Gastrocnemius medialis (tissue), 4 donors: ENCODE measurements at regions of chr9 and their contacts with region 1.

Region 1: DNA sequence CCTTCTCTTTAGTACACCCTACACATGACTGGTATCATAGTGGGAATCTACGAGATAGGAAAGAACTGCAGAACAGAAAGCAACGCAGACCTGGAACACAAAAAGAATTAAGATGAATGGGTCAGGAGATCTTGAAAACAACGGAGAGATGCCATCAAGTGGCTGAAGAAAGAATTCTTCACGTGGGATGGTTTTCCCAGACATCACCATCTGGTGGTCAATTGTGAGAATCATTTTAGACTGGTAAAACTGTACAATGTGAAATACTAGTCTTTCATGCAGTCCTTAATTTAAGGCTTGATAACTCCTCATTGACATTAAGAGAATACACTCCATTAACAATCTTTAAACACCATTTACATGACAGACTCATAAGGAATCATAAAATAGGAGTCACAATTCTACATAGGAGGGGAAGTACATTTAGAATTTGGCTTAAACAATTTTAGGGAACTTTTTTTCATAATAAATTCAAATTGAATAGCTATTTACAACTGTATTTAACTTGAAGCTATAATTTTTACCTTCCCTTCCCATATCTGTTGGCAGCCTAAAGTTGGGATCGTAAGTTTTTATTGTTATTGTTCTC is 128.4 kb upstream of the TRPM3 start:
- DNase-seq: no peak
- ATAC-seq: peak in 1 of 2 donors; percentile 71
- H3K4me3 ChIP-seq: no peak overlapping the region
- H3K27ac ChIP-seq: no peak overlapping the region
- H3K4me1 ChIP-seq: no peaks in the 10 kb centered on the region
- H3K27me3 ChIP-seq: no peaks in the 10 kb centered on the region
- CTCF ChIP-seq: peak in 3 of 5 experiments; percentile 10 to 53 (median 47)
- POLR2A ChIP-seq: no peak

Region 2: GRCh38 chr9:70639853-70640814 is 609.7 kb before region 1 on chr9:
- in situ Hi-C with region 1: loop called in 3 of 4 experiments (anchors 5 to 25 kb)
- intact Hi-C with region 1: no loop called
- DNase-seq: no peak
- ATAC-seq: peak; percentile 69 to 75
- H3K4me3 ChIP-seq: no peak overlapping the region
- H3K27ac ChIP-seq: no peak overlapping the region
- H3K4me1 ChIP-seq: no peaks in the 10 kb centered on the region
- H3K27me3 ChIP-seq: no peaks in the 10 kb centered on the region
- CTCF ChIP-seq: peak in 4 of 5 experiments; percentile 43 to 58 (median 54)
- POLR2A ChIP-seq: no peak

Region 3: GRCh38 chr9:70668751-70669150 is 581.1 kb before region 1 on chr9:
- in situ Hi-C with region 1: loop called in 1 of 4 experiments (anchors 25 kb)
- intact Hi-C with region 1: no loop called
- DNase-seq: no peak
- ATAC-seq: no peak
- H3K4me3 ChIP-seq: no peak overlapping the region
- H3K27ac ChIP-seq: no peak overlapping the region
- H3K4me1 ChIP-seq: no peaks in the 10 kb centered on the region
- H3K27me3 ChIP-seq: no peaks in the 10 kb centered on the region
- CTCF ChIP-seq: no peak
- POLR2A ChIP-seq: no peak